Heart right ventricle (tissue), 16 donors: ENCODE measurements at regions of chr1 and their contacts with region 1.

Region 1: GRCh38 chr1:241213139-241213538 is 143.9 kb downstream of the RGS7 start:
- DNase-seq: no peak
- ATAC-seq: no peak
- H3K4me3 ChIP-seq: no peak overlapping the region
- H3K27ac ChIP-seq: no peak overlapping the region
- H3K4me1 ChIP-seq: no peaks in the 10 kb centered on the region
- H3K27me3 ChIP-seq: no peaks in the 10 kb centered on the region
- CTCF ChIP-seq: no peak

Region 2: GRCh38 chr1:241202401-241202800 is 10.7 kb before region 1 on chr1:
- intact Hi-C with region 1: loop called in 1 of 10 experiments (anchors 2 kb)
- DNase-seq: no peak
- ATAC-seq: no peak
- H3K4me3 ChIP-seq: no peak overlapping the region
- H3K27ac ChIP-seq: no peak overlapping the region
- H3K4me1 ChIP-seq: no peaks in the 10 kb centered on the region
- H3K27me3 ChIP-seq: no peaks in the 10 kb centered on the region
- CTCF ChIP-seq: no peak